ENCODE measurements at regions of chr2 and their contacts with region 1.

Region 1: GRCh38 chr2:174697255-174697654 is 67.0 kb downstream of the CHRNA1 start:
- DNase-seq: peak; percentile 82
- ATAC-seq: peak; percentile 98
- H3K4me3 Mint-ChIP-seq: no peak overlapping the region
- H3K27ac Mint-ChIP-seq: no peak overlapping the region
- H3K4me1 Mint-ChIP-seq: no peaks in the 10 kb centered on the region
- H3K27me3 Mint-ChIP-seq: peaks cover 26% of the 10 kb centered on the region

Region 2: GRCh38 chr2:174553811-174554493 is 143.3 kb before region 1 on chr2:
- CTCF ChIA-PET with region 1: interaction called, 10 read pairs
- DNase-seq: peak; percentile 72
- ATAC-seq: peak; percentile 80
- H3K4me3 Mint-ChIP-seq: peak overlapping the region; percentile 45
- H3K27ac Mint-ChIP-seq: peak overlapping the region; percentile 82
- H3K4me1 Mint-ChIP-seq: peaks cover 39% of the 10 kb centered on the region
- H3K27me3 Mint-ChIP-seq: no peaks in the 10 kb centered on the region

Region 3: DNA sequence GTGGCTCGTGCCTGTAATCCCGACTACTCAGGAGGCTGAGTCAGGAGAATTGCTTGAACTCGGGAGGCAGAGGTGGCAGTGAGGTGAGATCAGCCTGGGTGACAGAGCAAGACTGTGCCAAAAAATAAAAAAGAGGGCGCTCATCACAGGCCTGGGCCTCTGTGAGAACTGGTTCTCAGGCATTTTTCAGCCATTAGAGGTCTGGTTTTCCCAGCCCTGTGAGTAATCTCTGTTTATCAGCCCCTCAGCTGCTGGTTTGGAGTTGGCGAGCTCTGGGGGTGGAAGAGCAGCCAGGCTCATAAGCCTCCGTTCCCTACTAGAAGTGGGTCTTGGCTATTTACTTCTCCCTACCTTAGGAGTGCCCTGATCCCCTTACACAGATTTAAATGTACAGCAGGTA is 14.0 kb after region 1 on chr2:
- CTCF ChIA-PET with region 1: interaction called, 22 read pairs
- DNase-seq: no peak
- ATAC-seq: no peak
- H3K4me3 Mint-ChIP-seq: no peak overlapping the region
- H3K27ac Mint-ChIP-seq: no peak overlapping the region
- H3K4me1 Mint-ChIP-seq: peaks cover 12% of the 10 kb centered on the region
- H3K27me3 Mint-ChIP-seq: peaks cover 11% of the 10 kb centered on the region

Region 4: GRCh38 chr2:174729797-174730697 is 32.8 kb after region 1 on chr2:
- CTCF ChIA-PET with region 1: interaction called, 32 read pairs
- DNase-seq: peak; percentile 56
- ATAC-seq: peak; percentile 85
- H3K4me3 Mint-ChIP-seq: peak overlapping the region; percentile 75
- H3K27ac Mint-ChIP-seq: no peak overlapping the region
- H3K4me1 Mint-ChIP-seq: peaks cover 23% of the 10 kb centered on the region
- H3K27me3 Mint-ChIP-seq: peaks cover 55% of the 10 kb centered on the region

Region 5: DNA sequence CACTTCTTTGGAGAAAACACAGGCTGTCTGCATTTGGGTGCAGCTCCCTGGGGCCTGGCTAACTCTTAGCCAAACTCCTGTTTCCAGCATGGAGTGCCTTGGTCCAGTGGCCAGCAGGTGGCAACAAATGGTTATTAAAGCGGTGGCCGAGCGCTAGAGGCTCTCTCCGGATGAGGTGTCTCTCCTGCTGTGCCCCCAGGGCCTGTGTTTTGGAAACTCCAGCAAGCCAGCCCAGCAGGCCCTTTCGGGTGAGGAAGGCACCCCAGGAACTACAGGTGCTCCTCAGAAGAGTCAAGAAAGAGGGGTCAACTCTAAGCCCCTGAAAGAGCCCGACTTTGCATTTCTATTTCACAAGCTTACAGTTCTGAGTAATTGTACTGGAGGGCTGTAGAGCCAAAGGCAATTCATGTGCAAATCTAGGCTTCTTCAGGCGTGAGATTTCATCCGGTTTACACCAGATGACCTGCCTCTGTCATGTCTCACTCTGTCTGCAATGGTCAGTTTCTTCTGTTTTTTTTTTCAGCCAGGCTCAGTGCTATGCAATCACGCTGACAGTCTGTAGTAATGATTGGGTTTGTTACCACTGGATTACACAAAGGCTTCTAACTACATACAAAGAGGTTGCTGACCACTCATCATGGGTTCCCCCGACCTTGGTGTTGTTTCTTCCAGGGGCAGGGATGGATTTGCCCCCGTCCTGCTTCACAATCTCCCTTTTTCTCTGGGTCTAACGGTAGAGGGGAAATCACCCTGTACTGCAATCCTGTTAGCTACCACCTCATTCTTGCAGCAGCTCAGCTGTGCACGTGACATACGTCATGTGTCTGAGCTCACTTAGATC is 74.6 kb after region 1 on chr2:
- CTCF ChIA-PET with region 1: interaction called, 23 read pairs
- DNase-seq: peak; percentile 67
- ATAC-seq: peak; percentile 84
- H3K4me3 Mint-ChIP-seq: no peak overlapping the region
- H3K27ac Mint-ChIP-seq: no peak overlapping the region
- H3K4me1 Mint-ChIP-seq: peaks cover 7% of the 10 kb centered on the region
- H3K27me3 Mint-ChIP-seq: no peaks in the 10 kb centered on the region

Region 6: GRCh38 chr2:174815526-174815925 is 118.3 kb after region 1 on chr2:
- CTCF ChIA-PET with region 1: no interaction called
- DNase-seq: no peak
- ATAC-seq: no peak
- H3K4me3 Mint-ChIP-seq: no peak overlapping the region
- H3K27ac Mint-ChIP-seq: no peak overlapping the region
- H3K4me1 Mint-ChIP-seq: no peaks in the 10 kb centered on the region
- H3K27me3 Mint-ChIP-seq: no peaks in the 10 kb centered on the region

Measured in activated CD8-positive, alpha-beta memory T cell treated with anti-CD3 and anti-CD28 coated beads, Interleukin-2, amount 10 ng/mL, durations not matched to agents 7 days and 5 days (primary cell).